HAP-1 (cell line): ENCODE measurements at regions of chr6 and their contacts with region 1.

Region 1: DNA sequence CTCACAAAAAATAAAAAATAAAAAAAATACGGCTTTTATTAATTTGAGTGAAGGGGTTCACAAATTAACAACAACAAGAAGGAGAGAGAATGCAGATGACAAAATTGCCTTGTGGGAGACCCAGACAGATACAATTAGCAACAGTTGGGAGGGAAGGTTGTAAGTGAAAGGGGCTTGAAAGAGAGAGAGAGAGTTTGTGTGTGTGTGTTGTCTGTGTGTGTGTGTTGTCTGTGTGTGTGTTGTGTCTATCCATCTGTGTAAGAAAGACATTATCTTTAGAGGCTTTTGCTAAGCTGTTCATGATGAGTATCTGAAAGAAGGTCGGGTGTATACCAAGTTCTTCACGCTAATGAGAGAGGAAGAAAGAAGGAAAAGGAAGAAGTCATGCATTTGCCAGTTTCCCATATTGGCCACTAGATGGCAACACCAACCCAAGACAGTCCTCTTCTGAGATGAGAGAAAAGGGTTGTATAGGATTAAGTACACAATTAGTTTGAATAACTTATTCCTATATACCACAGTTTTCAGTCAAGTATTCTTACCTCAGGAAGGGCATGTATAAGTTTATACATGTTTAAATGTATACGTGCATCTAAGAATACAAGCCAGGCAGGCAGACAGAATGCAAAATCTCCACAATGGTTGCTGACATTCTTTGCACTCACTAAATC is 63.7 kb upstream of the CD2AP start:
- DNase-seq: peak; percentile 46 to 81
- H3K4me3 ChIP-seq: peak overlapping the region; percentile 6; the same call in 1 of the 2 replicates
- H3K4me1 ChIP-seq: peaks cover 10% of the 10 kb centered on the region
- H3K27me3 ChIP-seq: no peaks in the 10 kb centered on the region

Region 2: GRCh38 chr6:47603995-47604394 is 190.1 kb after region 1 on chr6:
- in situ Hi-C with region 1: loop called (anchors 25 kb)
- DNase-seq: no peak
- H3K4me3 ChIP-seq: no peak overlapping the region
- H3K4me1 ChIP-seq: no peaks in the 10 kb centered on the region
- H3K27me3 ChIP-seq: no peaks in the 10 kb centered on the region